Heart left ventricle (tissue), 16 donors: ENCODE measurements at regions of chr20 and their contacts with region 1.

Region 1: DNA sequence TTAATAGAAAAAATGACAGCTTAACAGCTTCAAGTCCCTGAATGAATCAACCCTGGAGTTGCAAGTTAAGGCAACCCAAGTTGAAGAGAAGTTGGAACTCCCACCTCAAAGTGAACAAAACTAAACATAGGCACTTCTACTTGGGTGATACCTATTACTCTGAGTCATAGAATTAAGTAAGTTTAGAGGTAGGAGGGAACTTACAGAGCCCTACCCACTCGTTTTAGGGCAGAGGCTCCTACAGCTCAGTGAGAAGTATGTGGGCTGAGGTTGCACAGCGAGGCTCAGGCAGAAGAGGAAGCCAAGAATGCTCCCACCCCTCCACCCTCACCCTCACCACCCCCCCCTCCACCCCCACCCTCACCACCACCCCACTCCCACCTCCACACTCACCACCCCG is 42.2 kb downstream of the NFATC2 start:
- DNase-seq: no peak
- ATAC-seq: peak in 2 of 4 donors; percentile 21 to 43
- H3K4me3 ChIP-seq: no peak overlapping the region
- H3K27ac ChIP-seq: peak overlapping the region in 1 of 12 donors; percentile 0
- H3K4me1 ChIP-seq: peaks cover 0 to 52% (median 13%) of the 10 kb centered on the region in 12 donors
- H3K27me3 ChIP-seq: no peaks in the 10 kb centered on the region
- CTCF ChIP-seq: no peak
- POLR2A ChIP-seq: no peak

Region 2: GRCh38 chr20:51385646-51386530 is 114.4 kb before region 1 on chr20:
- intact Hi-C with region 1: loop called in 1 of 10 experiments (anchors 10 kb)
- DNase-seq: no peak
- ATAC-seq: peak; percentile 37 to 58 (median 46)
- H3K4me3 ChIP-seq: no peak overlapping the region
- H3K27ac ChIP-seq: no peak overlapping the region
- H3K4me1 ChIP-seq: peaks cover 0 to 49% (median 16%) of the 10 kb centered on the region in 12 donors
- H3K27me3 ChIP-seq: no peaks in the 10 kb centered on the region
- CTCF ChIP-seq: peak; percentile 25 to 68 (median 55)
- POLR2A ChIP-seq: no peak

Region 3: GRCh38 chr20:51434580-51435247 is 65.6 kb before region 1 on chr20:
- intact Hi-C with region 1: loop called in 1 of 10 experiments (anchors 10 kb)
- DNase-seq: no peak
- ATAC-seq: no peak
- H3K4me3 ChIP-seq: no peak overlapping the region
- H3K27ac ChIP-seq: no peak overlapping the region
- H3K4me1 ChIP-seq: peaks cover 0 to 7% (median 0%) of the 10 kb centered on the region in 12 donors
- H3K27me3 ChIP-seq: no peaks in the 10 kb centered on the region
- CTCF ChIP-seq: no peak
- POLR2A ChIP-seq: no peak

Region 4: GRCh38 chr20:51531141-51531710 is 30.9 kb after region 1 on chr20:
- intact Hi-C with region 1: loop called in 1 of 10 experiments (anchors 5 kb)
- DNase-seq: no peak
- ATAC-seq: no peak
- H3K4me3 ChIP-seq: no peak overlapping the region
- H3K27ac ChIP-seq: peak overlapping the region in 4 of 12 donors; percentile 13 to 87 (median 56)
- H3K4me1 ChIP-seq: peaks cover 0 to 88% (median 34%) of the 10 kb centered on the region in 12 donors
- H3K27me3 ChIP-seq: no peaks in the 10 kb centered on the region
- CTCF ChIP-seq: no peak
- POLR2A ChIP-seq: no peak

Region 5: DNA sequence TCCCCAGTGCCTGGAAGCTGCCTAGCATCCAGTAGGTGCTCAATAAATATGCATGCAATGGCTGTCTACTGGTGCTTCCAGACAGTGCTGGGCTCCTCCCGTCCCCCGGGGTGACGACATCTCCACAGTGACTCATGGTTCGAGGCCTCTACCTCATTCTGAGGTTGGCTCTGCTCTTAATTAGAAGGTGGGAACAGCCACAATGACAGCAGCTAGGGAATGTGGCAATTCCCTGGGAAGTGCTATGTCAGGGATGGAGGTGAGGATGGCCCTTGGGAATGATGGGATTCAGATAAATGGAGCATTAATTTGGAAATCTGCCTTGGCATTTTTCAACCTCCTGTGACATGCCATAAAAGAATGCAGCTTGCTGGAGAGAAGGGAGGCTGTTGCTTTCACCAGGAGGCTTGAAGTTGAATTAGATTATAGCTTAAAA is 85.7 kb after region 1 on chr20:
- intact Hi-C with region 1: loop called in 1 of 10 experiments (anchors 10 kb)
- DNase-seq: no peak
- ATAC-seq: peak in 1 of 4 donors; percentile 29
- H3K4me3 ChIP-seq: no peak overlapping the region
- H3K27ac ChIP-seq: no peak overlapping the region
- H3K4me1 ChIP-seq: no peaks in the 10 kb centered on the region
- H3K27me3 ChIP-seq: no peaks in the 10 kb centered on the region
- CTCF ChIP-seq: no peak
- POLR2A ChIP-seq: no peak

Region 6: DNA sequence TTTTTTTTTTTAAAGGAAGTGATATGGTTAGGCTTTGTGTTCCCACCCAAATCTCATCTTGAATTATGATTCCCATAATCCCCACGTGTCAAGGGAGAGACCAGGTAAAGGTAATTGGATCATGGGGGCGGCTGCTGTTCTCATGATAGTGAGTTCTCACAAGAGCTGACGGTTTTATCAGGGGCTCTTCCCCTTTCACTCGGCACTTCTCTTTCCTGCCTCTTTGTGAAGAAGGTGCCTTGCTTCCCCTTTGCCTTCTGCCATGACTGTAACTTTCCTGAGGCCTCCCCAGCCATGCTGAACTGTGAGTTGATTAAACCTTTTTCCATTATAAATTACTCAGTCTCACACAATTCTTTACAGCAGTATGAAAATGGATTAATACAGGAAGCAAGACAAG is 627.0 kb after region 1 on chr20:
- intact Hi-C with region 1: no loop called
- DNase-seq: no peak
- ATAC-seq: no peak
- H3K4me3 ChIP-seq: no peak overlapping the region
- H3K27ac ChIP-seq: no peak overlapping the region
- H3K4me1 ChIP-seq: no peaks in the 10 kb centered on the region
- H3K27me3 ChIP-seq: no peaks in the 10 kb centered on the region
- CTCF ChIP-seq: no peak
- POLR2A ChIP-seq: no peak

Region 7: DNA sequence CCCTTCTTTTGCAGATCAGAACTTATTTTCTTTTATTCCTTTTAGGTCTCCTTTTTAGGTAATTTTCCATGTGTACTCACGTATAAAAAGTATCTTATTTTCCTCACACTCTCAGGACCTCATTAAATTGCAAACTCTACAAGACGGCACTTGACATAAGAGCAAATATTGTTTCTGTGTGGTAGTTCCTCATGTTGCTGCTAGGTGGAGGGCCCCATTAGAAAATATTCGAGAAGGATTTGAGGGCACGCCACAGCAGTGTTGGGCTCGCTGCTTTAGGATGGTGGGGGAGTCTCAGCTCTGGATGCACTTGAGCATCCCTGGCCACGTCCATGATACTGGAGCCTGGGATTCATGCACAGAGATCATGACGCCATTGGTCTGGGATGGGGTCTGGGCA is 756.1 kb after region 1 on chr20:
- intact Hi-C with region 1: no loop called
- DNase-seq: no peak
- ATAC-seq: no peak
- H3K4me3 ChIP-seq: no peak overlapping the region
- H3K27ac ChIP-seq: no peak overlapping the region
- H3K4me1 ChIP-seq: no peaks in the 10 kb centered on the region
- H3K27me3 ChIP-seq: peaks cover 0 to 10% (median 0%) of the 10 kb centered on the region in 9 donors
- CTCF ChIP-seq: no peak
- POLR2A ChIP-seq: no peak